Dorsolateral prefrontal cortex (tissue), 120 donors: ENCODE measurements at regions of chr5 and their contacts with region 1.

Region 1: DNA sequence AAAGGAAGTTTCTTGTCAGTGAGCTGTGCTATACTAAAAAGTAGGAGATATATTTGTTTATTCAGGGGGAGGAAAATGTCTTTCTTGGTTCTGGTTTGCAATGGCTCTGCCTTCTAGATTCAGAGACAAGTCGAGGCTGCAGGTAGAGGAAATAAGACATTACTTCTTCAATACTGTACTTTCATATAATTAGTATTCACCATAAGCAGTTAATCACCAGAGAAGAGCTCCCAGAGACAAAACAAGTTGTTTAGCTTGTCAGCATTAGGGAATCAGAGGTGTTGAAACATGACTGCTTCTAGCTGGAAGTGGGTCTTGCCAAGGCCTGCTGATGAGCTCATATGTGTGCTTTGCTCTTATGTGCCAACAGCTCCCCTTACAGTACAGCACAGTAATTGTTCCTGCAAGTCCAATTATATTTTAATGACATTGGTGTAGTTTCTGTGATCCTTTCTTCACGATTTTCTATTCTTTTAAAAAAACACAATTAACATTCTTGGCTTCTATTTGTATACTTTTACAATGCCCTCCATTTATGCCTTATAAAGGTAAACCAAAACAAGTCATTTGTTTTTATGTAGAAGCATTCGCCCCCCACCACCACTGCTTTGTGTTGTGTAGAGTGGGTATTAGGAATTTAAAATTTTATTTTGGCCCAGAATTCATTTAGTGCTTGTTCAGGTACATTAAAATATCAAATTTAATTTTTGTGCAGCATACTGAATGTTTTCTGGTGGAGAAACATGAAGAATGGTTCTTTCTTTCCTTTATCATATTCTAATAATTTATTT is 112.2 kb downstream of the RPS23 start:
- DNase-seq: peak in 9 of 10 donors; percentile 49 to 81 (median 69)
- H3K4me3 ChIP-seq: no peak overlapping the region
- H3K27ac ChIP-seq: peak overlapping the region in 51 of 59 donors; percentile 7 to 87 (median 57)
- H3K27me3 ChIP-seq: no peaks in the 10 kb centered on the region
- CTCF ChIP-seq: peak; percentile 58 to 90 (median 79)

Region 2: DNA sequence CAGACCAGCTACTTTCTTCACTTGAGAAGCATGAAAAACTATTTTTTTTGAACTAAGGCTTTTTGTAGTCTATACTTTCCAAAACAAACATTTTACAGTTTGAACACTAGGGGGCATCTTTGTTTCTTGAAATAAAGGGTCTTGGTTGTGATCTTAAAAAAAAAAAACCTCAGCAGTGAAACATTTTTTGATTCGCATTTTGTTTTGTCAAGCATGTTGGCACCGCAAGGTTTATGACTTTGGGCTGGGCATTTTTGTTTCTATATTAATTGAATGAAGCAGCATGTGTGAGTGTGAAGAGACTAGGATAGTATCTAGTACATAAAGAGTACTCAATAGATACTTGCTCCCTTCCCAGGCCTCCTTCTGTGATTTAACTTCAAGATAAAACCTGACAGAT is 740.4 kb before region 1 on chr5:
- intact Hi-C with region 1: loop called (anchors 10 kb)
- DNase-seq: no peak
- H3K4me3 ChIP-seq: peak overlapping the region in 1 of 59 donors; percentile 14
- H3K27ac ChIP-seq: peak overlapping the region in 41 of 59 donors; percentile 0 to 67 (median 39)
- H3K27me3 ChIP-seq: no peaks in the 10 kb centered on the region
- CTCF ChIP-seq: peak; percentile 64 to 93 (median 79)

Region 3: DNA sequence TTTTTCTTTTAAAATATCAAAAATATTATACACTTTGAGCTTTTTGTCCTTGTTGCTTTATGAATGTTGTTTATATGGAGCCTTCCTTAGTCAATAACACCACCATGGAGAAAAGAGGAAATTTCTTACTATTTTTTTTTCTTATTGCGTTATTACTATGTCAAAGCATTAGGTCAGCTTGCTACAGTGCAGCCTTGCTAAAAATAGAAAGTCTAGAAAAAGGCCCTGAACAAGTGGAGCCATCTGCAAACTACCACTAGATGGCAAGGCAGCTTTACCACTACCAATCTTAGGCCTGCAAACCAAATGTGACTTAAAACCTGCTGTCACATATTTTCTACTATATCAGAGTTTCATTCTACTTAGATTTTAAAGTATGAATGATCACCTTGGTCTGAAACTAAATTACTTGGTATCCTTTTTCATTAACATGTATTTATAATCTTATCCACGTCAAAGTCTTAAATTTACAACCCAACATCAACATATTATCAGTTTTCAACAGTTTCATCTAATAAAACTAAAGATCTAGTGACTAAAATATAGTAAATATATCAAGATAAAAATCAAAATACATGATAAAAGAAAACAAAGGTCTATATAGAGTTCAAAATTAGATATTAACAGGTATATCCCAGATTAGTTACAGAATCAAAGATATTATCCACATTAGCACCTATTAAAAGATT is 658.9 kb before region 1 on chr5:
- intact Hi-C with region 1: loop called in 1 of 2 experiments (anchors 5 kb)
- DNase-seq: peak in 7 of 10 donors; percentile 25 to 76 (median 50)
- H3K4me3 ChIP-seq: peak overlapping the region in 8 of 59 donors; percentile 1 to 54 (median 7)
- H3K27ac ChIP-seq: peak overlapping the region in 45 of 59 donors; percentile 0 to 80 (median 41)
- H3K27me3 ChIP-seq: no peaks in the 10 kb centered on the region
- CTCF ChIP-seq: peak; percentile 62 to 98 (median 89)

Region 4: GRCh38 chr5:81525690-81526089 is 640.2 kb before region 1 on chr5:
- intact Hi-C with region 1: no loop called
- DNase-seq: no peak
- H3K4me3 ChIP-seq: no peak overlapping the region
- H3K27ac ChIP-seq: no peak overlapping the region
- H3K27me3 ChIP-seq: no peaks in the 10 kb centered on the region
- CTCF ChIP-seq: no peak

Region 5: GRCh38 chr5:81787474-81788242 is 378.3 kb before region 1 on chr5:
- intact Hi-C with region 1: loop called in 1 of 2 experiments (anchors 10 kb)
- DNase-seq: peak in 1 of 10 donors; percentile 68
- H3K4me3 ChIP-seq: peak overlapping the region in 24 of 59 donors; percentile 2 to 38 (median 14)
- H3K27ac ChIP-seq: peak overlapping the region in 40 of 59 donors; percentile 7 to 72 (median 50)
- H3K27me3 ChIP-seq: no peaks in the 10 kb centered on the region
- CTCF ChIP-seq: no peak

Region 6: DNA sequence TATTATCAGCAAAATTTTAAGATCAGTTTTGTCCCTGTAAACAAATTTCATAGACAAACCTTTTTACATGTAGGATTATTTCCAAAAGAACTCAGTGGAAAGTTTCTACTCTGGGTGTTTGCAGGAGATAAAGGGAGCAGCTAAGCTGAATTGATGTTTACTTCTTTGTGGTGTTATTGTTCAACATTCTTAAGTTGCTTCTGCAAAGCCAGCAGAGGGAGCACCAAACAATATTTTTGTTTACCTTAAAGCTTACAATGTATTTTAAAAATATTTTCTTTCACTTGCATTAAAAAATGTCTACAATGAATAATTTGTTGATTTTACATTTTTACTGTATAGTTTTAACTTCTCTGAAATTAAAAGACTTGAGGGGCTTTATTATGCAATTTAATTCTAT is 58.7 kb before region 1 on chr5:
- intact Hi-C with region 1: loop called in 1 of 2 experiments (anchors 5 kb)
- DNase-seq: no peak
- H3K4me3 ChIP-seq: peak overlapping the region in 9 of 59 donors; percentile 3 to 18 (median 10)
- H3K27ac ChIP-seq: peak overlapping the region in 27 of 59 donors; percentile 1 to 73 (median 31)
- H3K27me3 ChIP-seq: no peaks in the 10 kb centered on the region
- CTCF ChIP-seq: peak; percentile 18 to 74 (median 57)